Esophagus muscularis mucosa (tissue), 4 donors: ENCODE measurements at regions of chr2 and their contacts with region 1.

Region 1: GRCh38 chr2:197255543-197255942 is 55.0 kb downstream of the ANKRD44 start:
- DNase-seq: peak; percentile 92
- H3K4me3 ChIP-seq: peak overlapping the region; percentile 20 to 33 (median 25)
- H3K27ac ChIP-seq: peak overlapping the region; percentile 43 to 79 (median 70)
- H3K4me1 ChIP-seq: peaks cover 11 to 34% (median 30%) of the 10 kb centered on the region in 4 donors
- H3K27me3 ChIP-seq: no peaks in the 10 kb centered on the region
- CTCF ChIP-seq: no peak
- EP300 ChIP-seq: no peak
- POLR2A ChIP-seq: no peak

Region 2: DNA sequence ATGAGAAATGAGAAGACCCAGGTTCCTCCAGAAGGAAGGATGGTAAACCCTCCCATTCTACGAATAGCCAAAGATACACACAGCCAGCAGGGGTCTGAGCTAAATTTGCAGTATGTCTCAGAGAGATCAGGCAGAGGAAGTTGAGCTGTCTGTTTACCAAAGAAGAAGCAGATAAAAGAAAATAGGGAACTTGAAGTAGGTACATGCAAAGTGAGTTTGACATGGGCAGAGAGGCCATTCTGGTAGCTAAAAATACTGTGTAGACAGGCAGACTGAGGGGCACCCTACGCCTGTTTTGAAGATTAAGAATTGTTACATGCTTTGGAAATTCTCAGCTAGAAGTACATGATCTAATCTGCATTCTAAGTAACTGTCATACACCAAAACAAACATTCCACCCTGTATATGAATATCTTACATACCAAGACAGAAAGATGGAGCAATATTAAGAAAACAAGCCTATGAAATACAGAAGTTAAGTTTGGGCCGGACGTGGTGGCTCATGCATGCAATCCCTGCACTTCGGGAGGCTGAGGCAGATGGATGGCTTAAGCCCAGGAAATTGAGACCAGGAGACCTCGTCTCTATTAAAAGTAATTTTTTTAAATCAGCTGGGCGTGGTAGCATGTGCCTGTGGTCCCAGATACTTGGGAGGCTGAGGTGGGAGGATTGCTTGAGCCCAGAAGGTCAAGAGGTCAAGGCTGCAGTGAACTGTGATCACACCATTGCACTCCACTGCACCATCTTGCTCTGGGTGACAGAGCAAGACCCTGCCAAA is 102.9 kb before region 1 on chr2:
- intact Hi-C with region 1: no loop called
- DNase-seq: no peak
- H3K4me3 ChIP-seq: no peak overlapping the region
- H3K27ac ChIP-seq: peak overlapping the region in 1 of 4 donors; percentile 34
- H3K4me1 ChIP-seq: peaks cover 6 to 25% (median 23%) of the 10 kb centered on the region in 4 donors
- H3K27me3 ChIP-seq: no peaks in the 10 kb centered on the region
- CTCF ChIP-seq: no peak
- EP300 ChIP-seq: no peak
- POLR2A ChIP-seq: no peak

Region 3: GRCh38 chr2:197191177-197191939 is 64.2 kb before region 1 on chr2:
- intact Hi-C with region 1: loop called (anchors 5 kb)
- DNase-seq: no peak
- H3K4me3 ChIP-seq: no peak overlapping the region
- H3K27ac ChIP-seq: no peak overlapping the region
- H3K4me1 ChIP-seq: peaks cover 5 to 58% (median 48%) of the 10 kb centered on the region in 4 donors
- H3K27me3 ChIP-seq: no peaks in the 10 kb centered on the region
- CTCF ChIP-seq: peak; percentile 64 to 70 (median 66)
- EP300 ChIP-seq: no peak
- POLR2A ChIP-seq: no peak

Region 4: DNA sequence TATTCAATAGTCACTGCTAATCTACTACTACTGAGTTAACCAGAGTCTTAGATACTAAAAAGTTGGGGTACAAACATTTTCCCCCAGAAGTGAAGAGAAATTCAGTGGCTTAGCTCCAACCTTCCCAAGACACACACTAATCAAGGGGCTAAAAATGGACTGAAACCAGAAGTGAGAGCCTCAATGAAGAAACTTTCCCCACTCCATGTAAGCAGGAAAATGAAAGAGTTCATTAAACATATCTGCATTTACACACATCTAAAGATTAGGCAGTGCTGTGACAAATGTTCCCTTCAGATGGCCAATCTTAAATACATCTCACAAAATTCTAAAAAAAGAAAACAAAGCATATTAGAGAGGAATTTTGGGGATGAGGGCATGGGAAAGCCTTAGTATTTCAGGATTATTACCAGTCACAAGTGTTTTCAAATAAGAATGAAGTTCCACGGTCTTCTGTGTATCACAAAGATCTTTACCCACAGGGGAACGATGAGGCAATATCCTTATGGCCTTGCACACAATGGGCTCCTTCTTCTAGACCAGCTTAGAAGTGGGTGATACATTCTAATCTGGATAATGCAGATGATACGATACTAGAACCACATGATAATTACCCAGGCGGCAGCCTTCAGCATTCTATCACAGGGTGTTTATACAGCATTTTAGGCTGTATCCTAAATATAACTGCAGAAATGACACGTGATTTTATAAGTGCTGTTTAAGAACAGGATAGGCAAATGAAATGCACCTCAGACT is 37.9 kb after region 1 on chr2:
- intact Hi-C with region 1: loop called (anchors 5 kb)
- DNase-seq: no peak
- H3K4me3 ChIP-seq: no peak overlapping the region
- H3K27ac ChIP-seq: peak overlapping the region; percentile 46 to 70 (median 50)
- H3K4me1 ChIP-seq: peaks cover 21 to 41% (median 27%) of the 10 kb centered on the region in 4 donors
- H3K27me3 ChIP-seq: no peaks in the 10 kb centered on the region
- CTCF ChIP-seq: no peak
- EP300 ChIP-seq: no peak
- POLR2A ChIP-seq: no peak